Mammary epithelial cell (primary cell): ENCODE measurements at regions of chr3 and their contacts with region 1.

Region 1: GRCh38 chr3:13884851-13885703 is 5.2 kb upstream of the WNT7A start:
- DNase-seq: peak; percentile 56
- H3K4me3 ChIP-seq: no peak overlapping the region
- H3K27ac ChIP-seq: no peak overlapping the region
- H3K4me1 ChIP-seq: peaks cover 9% of the 10 kb centered on the region
- H3K27me3 ChIP-seq: no peaks in the 10 kb centered on the region
- CTCF ChIP-seq: peak; percentile 82 to 91

Region 2: DNA sequence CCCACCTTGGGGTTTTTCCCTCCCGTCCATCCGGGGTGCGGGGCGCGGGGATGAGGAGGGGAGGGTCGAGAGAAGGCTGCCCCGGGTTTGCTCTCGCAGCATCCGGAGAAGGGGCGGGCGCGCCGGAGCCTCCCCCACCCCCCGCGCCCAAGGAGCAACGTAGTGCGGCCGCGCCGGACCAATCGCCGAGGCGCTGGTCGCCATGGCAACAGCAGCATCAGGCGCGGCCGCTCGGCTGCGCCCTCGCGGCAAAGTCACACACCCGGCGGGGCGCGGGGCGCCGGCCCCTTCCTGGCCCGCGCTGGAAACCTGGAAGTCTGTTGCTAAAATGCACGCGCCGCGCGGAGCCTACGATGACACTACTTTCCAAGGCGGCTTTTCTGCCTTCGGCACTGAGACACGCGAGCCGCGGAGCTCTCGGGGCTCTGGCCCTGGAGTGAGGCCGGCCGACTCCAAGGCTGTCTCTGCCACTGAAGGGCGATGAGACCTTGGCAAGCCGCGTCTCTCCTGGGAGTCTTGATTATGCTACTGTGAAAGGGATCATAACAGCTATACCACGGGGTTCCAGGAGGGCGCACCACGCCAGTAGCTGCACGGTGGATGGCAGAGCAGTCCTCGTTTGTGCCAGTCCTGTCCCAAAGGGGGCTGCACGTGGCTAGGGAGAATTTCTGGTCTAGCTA is 811.6 kb before region 1 on chr3 and contains the start of gene IQSEC1:
- CTCF ChIA-PET with region 1: no interaction called
- dilution Hi-C with region 1: no loop called
- in situ Hi-C with region 1: loop called in 1 of 2 experiments (anchors 10 kb)
- intact Hi-C with region 1: no loop called
- DNase-seq: no peak
- H3K4me3 ChIP-seq: no peak within 1 kb of the TSS
- H3K27ac ChIP-seq: no peak within 1 kb of the TSS
- H3K4me1 ChIP-seq: no peaks in the 10 kb centered on the region
- H3K27me3 ChIP-seq: peaks cover 22% of the 10 kb centered on the region
- CTCF ChIP-seq: no peak
- total RNA-seq, gene IQSEC1: 15.6 to 32.8 TPM

Region 3: DNA sequence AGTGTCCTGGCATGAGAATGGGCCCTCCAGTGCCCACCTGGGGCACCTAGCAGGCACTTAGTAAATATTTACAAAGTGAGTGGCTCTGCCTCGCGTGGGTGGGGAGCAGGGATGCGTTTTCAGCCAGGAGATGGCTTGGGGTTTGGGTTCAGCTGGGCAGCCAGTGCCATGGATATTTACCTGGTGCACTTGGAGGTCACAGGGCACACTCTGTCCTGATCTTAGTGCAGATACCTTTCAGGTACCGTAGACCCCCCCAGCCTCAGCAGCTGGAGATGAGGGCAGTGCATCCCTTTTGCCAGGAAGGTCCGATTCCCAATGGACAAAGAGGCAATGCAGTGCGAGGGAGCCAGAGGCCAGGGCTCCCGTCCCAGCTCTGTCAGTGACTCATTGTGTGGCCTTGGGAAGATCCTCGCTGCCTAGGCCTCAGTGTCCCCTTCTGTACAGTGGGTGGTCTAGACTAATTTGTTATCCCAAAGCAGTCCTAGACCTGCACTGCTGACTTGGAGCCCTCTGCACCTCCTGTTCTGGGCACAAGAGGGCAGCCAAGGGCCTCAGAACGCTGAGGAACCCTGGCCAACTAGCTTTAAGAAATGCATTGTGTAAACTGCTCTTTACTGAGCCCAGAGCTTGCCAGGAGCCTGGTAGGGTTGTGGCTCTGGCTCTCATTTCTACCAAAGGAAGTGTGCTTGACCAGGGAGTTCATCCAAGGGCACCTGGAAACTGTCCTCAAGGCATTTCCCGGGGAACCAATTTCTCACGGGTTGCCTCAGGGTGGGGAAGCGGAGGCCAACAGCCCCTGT is 389.0 kb before region 1 on chr3:
- CTCF ChIA-PET with region 1: no interaction called
- dilution Hi-C with region 1: no loop called
- in situ Hi-C with region 1: loop called (anchors 5 kb)
- intact Hi-C with region 1: loop called (anchors 1 kb)
- DNase-seq: peak; percentile 57
- H3K4me3 ChIP-seq: no peak overlapping the region
- H3K27ac ChIP-seq: no peak overlapping the region
- H3K4me1 ChIP-seq: no peaks in the 10 kb centered on the region
- H3K27me3 ChIP-seq: no peaks in the 10 kb centered on the region
- CTCF ChIP-seq: peak; percentile 96

Region 4: GRCh38 chr3:13657660-13658435 is 227.2 kb before region 1 on chr3:
- CTCF ChIA-PET with region 1: interaction called, 17 read pairs
- dilution Hi-C with region 1: loop called (anchors 5 kb)
- in situ Hi-C with region 1: loop called (anchors 5 kb)
- intact Hi-C with region 1: loop called (anchors 1 kb)
- DNase-seq: peak; percentile 37
- H3K4me3 ChIP-seq: no peak overlapping the region
- H3K27ac ChIP-seq: no peak overlapping the region
- H3K4me1 ChIP-seq: peaks cover 11% of the 10 kb centered on the region
- H3K27me3 ChIP-seq: no peaks in the 10 kb centered on the region
- CTCF ChIP-seq: peak; percentile 85 to 98

Region 5: GRCh38 chr3:13822042-13822441 is 63.0 kb before region 1 on chr3:
- CTCF ChIA-PET with region 1: no interaction called
- dilution Hi-C with region 1: no loop called
- in situ Hi-C with region 1: no loop called
- intact Hi-C with region 1: loop called (anchors 1 kb)
- DNase-seq: peak; percentile 94
- H3K4me3 ChIP-seq: no peak overlapping the region
- H3K27ac ChIP-seq: peak overlapping the region; percentile 30
- H3K4me1 ChIP-seq: peaks cover 39% of the 10 kb centered on the region
- H3K27me3 ChIP-seq: no peaks in the 10 kb centered on the region
- CTCF ChIP-seq: no peak

Region 6: GRCh38 chr3:13836741-13837480 is 48.2 kb before region 1 on chr3:
- CTCF ChIA-PET with region 1: no interaction called
- dilution Hi-C with region 1: no loop called
- in situ Hi-C with region 1: no loop called
- intact Hi-C with region 1: loop called (anchors 1 kb)
- DNase-seq: peak; percentile 57
- H3K4me3 ChIP-seq: no peak overlapping the region
- H3K27ac ChIP-seq: no peak overlapping the region
- H3K4me1 ChIP-seq: peaks cover 47% of the 10 kb centered on the region
- H3K27me3 ChIP-seq: no peaks in the 10 kb centered on the region
- CTCF ChIP-seq: peak; percentile 18 to 64

Region 7: DNA sequence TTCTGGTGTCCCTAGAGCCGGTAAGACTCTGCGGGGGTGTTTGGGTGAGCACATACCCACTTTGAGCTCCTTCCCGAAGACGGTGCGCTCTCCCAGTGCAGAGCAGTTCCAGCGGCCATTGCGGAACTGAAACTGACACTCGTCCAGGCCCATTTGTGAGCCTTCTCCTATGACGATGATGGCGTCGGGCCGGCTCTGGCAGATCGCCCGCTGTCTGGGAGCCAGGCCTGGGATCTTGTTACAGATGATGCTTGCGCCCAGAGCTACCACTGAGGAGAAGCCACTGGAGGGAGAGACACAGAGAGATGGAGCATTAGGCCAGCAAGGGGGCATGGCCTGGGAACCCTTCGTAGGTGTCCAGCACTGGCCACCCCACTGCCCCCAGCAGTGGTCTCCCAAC is 10.2 kb before region 1 on chr3:
- CTCF ChIA-PET with region 1: no interaction called
- dilution Hi-C with region 1: no loop called
- in situ Hi-C with region 1: no loop called
- intact Hi-C with region 1: no loop called
- DNase-seq: no peak
- H3K4me3 ChIP-seq: no peak overlapping the region
- H3K27ac ChIP-seq: no peak overlapping the region
- H3K4me1 ChIP-seq: peaks cover 5% of the 10 kb centered on the region
- H3K27me3 ChIP-seq: no peaks in the 10 kb centered on the region
- CTCF ChIP-seq: no peak